GM13976 (cell line): ENCODE measurements at regions of chr2 and their contacts with region 1.

Region 1: GRCh38 chr2:206693399-206694137 is 24.6 kb downstream of the DYTN start:
- DNase-seq: peak; percentile 49
- CTCF ChIP-seq: peak; percentile 18

Region 2: DNA sequence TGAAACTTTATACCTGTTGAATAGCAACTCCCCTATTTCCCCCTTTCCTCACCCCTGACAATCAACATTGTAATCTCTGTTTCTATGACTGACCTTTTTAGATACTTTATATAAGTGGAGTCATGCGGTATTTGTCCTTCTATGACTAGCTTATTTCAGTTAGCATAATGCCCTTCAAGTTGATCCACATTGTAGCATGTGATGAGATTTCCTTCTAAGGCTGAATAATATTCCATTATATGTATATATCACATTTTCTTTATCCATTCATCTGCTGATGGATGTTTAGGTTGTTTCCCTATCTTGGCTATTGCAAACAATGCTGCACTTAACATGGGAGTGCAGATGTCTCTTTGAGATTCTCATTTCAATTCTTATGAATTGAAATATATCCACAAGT is 81.3 kb after region 1 on chr2:
- in situ Hi-C with region 1: loop called (anchors 10 kb)
- DNase-seq: no peak
- CTCF ChIP-seq: no peak